CD8-positive, alpha-beta T cell (primary cell): ENCODE measurements at regions of chr21 and their contacts with region 1.

Region 1: GRCh38 chr21:24323536-24323935 is 1283.7 kb downstream of the MRPL39 start:
- DNase-seq: no peak
- ATAC-seq: no peak
- H3K4me3 ChIP-seq: no peak overlapping the region
- H3K4me3 Mint-ChIP-seq: no peak overlapping the region
- H3K27ac ChIP-seq: no peak overlapping the region
- H3K27ac Mint-ChIP-seq: no peak overlapping the region
- H3K4me1 ChIP-seq: no peaks in the 10 kb centered on the region
- H3K4me1 Mint-ChIP-seq: no peaks in the 10 kb centered on the region
- H3K27me3 ChIP-seq: no peaks in the 10 kb centered on the region
- H3K27me3 Mint-ChIP-seq: no peaks in the 10 kb centered on the region
- CTCF ChIP-seq: no peak

Region 2: GRCh38 chr21:24310788-24311187 is 12.7 kb before region 1 on chr21:
- CTCF ChIA-PET with region 1: no interaction called
- POLR2A ChIA-PET with region 1: no interaction called
- intact Hi-C with region 1: no loop called
- DNase-seq: no peak
- ATAC-seq: no peak
- H3K4me3 ChIP-seq: no peak overlapping the region
- H3K4me3 Mint-ChIP-seq: no peak overlapping the region
- H3K27ac ChIP-seq: no peak overlapping the region
- H3K27ac Mint-ChIP-seq: no peak overlapping the region
- H3K4me1 ChIP-seq: no peaks in the 10 kb centered on the region
- H3K4me1 Mint-ChIP-seq: no peaks in the 10 kb centered on the region
- H3K27me3 ChIP-seq: no peaks in the 10 kb centered on the region
- H3K27me3 Mint-ChIP-seq: no peaks in the 10 kb centered on the region
- CTCF ChIP-seq: no peak

Region 3: DNA sequence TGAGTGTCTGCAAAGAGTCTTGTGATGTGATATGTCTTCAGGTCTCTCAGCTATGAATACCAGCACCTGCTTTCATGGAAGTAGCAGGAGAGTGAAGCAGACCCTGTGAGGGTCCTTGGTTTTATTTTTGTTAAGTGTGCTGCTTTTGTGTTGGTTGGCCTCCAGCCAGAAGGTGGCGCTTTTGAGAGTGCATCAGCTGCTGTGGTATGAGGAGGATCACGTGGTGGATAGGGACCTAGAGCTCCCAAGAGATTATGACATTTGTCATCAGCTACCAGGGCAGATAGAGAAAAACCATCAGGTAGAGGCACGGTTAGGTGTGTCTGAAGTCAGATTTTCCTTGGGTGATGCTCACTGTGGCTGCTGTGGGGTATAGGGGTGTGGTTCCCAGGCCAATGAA is 51.7 kb after region 1 on chr21:
- CTCF ChIA-PET with region 1: no interaction called
- POLR2A ChIA-PET with region 1: no interaction called
- intact Hi-C with region 1: loop called in 1 of 2 experiments (anchors 10 kb)
- DNase-seq: peak in 3 of 9 experiments; percentile 6 to 19 (median 9)
- ATAC-seq: no peak
- H3K4me3 ChIP-seq: no peak overlapping the region
- H3K4me3 Mint-ChIP-seq: no peak overlapping the region
- H3K27ac ChIP-seq: no peak overlapping the region
- H3K27ac Mint-ChIP-seq: no peak overlapping the region
- H3K4me1 ChIP-seq: no peaks in the 10 kb centered on the region
- H3K4me1 Mint-ChIP-seq: no peaks in the 10 kb centered on the region
- H3K27me3 ChIP-seq: no peaks in the 10 kb centered on the region
- H3K27me3 Mint-ChIP-seq: no peaks in the 10 kb centered on the region
- CTCF ChIP-seq: no peak

Region 4: DNA sequence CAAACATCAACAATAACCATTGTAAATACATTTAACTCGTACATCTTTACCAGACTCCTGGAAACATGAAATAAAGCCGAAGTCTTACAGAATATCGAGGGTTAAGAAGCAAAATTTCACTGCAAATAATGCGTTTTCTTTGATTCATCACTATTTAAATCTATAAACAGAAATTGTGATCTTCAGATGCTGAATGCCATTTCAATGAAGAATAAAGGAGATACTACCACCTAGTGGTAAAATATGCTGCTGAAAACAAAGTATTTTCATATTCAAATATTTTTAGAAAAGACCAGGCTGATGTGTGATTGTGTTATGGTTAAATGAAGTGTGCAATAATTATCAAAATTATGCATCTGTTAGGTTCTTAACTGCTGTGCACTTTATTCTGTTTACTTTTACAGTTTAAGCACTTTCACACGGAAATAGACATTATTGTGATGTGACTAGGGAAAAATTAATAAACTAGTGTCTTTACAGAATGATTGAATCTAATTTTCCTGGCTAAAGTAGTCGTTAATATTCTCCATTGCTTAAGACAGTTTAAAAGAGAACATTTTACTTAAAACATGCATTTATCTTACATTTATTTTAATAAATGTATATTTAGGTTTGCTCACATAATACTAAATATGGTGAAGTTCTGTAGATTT is 190.7 kb after region 1 on chr21:
- CTCF ChIA-PET with region 1: no interaction called
- POLR2A ChIA-PET with region 1: no interaction called
- intact Hi-C with region 1: no loop called
- DNase-seq: peak in 1 of 9 experiments; percentile 17
- ATAC-seq: no peak
- H3K4me3 ChIP-seq: no peak overlapping the region
- H3K4me3 Mint-ChIP-seq: no peak overlapping the region
- H3K27ac ChIP-seq: no peak overlapping the region
- H3K27ac Mint-ChIP-seq: no peak overlapping the region
- H3K4me1 ChIP-seq: no peaks in the 10 kb centered on the region
- H3K4me1 Mint-ChIP-seq: no peaks in the 10 kb centered on the region
- H3K27me3 ChIP-seq: no peaks in the 10 kb centered on the region
- H3K27me3 Mint-ChIP-seq: peaks cover 3% of the 10 kb centered on the region
- CTCF ChIP-seq: peak; percentile 61